Common myeloid progenitor, CD34-positive (primary cell): ENCODE measurements at regions of chr9 and their contacts with region 1.

Region 1: GRCh38 chr9:124929464-124929863 is 11.4 kb downstream of the GOLGA1 start:
- DNase-seq: no peak
- H3K4me3 ChIP-seq: no peak overlapping the region
- H3K27ac ChIP-seq: no peak overlapping the region
- H3K4me1 ChIP-seq: peaks cover 0 to 3% (median 1%) of the 10 kb centered on the region in 4 experiments
- H3K27me3 ChIP-seq: no peaks in the 10 kb centered on the region

Region 2: DNA sequence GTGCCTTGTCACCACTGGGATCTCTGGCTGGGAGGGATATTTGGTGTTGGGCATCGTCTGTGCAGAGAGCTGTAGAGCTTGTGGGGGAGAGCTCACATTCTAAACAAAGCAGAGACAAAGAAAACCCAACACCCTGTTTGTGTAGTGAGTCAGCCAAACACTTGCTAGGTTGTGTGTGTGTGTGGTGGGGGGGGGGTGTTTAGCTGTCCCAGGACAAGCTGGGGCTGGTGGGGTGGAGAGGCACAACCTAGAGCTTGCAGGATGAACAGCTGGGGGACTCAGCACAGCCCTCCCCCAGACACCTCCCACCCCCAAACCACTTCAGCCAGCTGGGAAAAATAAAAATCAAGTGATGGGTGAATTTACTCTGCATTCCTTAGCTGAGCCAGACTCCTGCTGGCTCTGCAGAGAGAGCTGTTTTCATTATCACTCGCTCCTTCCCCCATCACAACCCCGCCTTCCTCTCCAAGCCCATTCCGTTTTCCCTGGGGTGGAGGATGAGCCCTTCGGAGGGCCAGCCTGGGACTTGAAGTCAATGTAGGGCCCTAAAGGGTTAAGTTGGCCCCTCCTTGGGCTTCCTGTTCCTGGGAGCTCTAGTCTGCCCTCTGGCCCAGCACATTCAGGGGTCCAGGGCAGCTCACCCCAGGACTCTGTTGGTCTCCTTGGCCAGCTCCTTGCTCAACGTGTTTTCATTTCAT is 150.0 kb before region 1 on chr9:
- CTCF ChIA-PET with region 1: no interaction called
- POLR2A ChIA-PET with region 1: no interaction called
- DNase-seq: no peak
- H3K4me3 ChIP-seq: no peak overlapping the region
- H3K27ac ChIP-seq: no peak overlapping the region
- H3K4me1 ChIP-seq: peaks cover 0 to 29% (median 15%) of the 10 kb centered on the region in 4 experiments
- H3K27me3 ChIP-seq: peaks cover 0 to 6% (median 3%) of the 10 kb centered on the region in 5 experiments

Region 3: GRCh38 chr9:124852829-124853531 is 76.5 kb before region 1 on chr9 and contains the start of gene WDR38:
- CTCF ChIA-PET with region 1: no interaction called
- POLR2A ChIA-PET with region 1: no interaction called
- DNase-seq: peak; percentile 66 to 86 (median 85)
- H3K4me3 ChIP-seq: peak within 1 kb of the TSS; percentile 16 to 75 (median 51)
- H3K27ac ChIP-seq: no peak within 1 kb of the TSS
- H3K4me1 ChIP-seq: peaks cover 0 to 21% (median 17%) of the 10 kb centered on the region in 4 experiments
- H3K27me3 ChIP-seq: no peaks in the 10 kb centered on the region

Region 4: GRCh38 chr9:124940693-124941453 is 11.4 kb after region 1 on chr9 and contains the start of gene GOLGA1:
- CTCF ChIA-PET with region 1: interaction called, 10 read pairs
- POLR2A ChIA-PET with region 1: no interaction called
- DNase-seq: peak; percentile 92 to 95 (median 94)
- H3K4me3 ChIP-seq: peak within 1 kb of the TSS; percentile 90 to 99 (median 94)
- H3K27ac ChIP-seq: peak within 1 kb of the TSS; percentile 92 to 97
- H3K4me1 ChIP-seq: peaks cover 10 to 18% (median 16%) of the 10 kb centered on the region in 4 experiments
- H3K27me3 ChIP-seq: no peaks in the 10 kb centered on the region

Region 5: DNA sequence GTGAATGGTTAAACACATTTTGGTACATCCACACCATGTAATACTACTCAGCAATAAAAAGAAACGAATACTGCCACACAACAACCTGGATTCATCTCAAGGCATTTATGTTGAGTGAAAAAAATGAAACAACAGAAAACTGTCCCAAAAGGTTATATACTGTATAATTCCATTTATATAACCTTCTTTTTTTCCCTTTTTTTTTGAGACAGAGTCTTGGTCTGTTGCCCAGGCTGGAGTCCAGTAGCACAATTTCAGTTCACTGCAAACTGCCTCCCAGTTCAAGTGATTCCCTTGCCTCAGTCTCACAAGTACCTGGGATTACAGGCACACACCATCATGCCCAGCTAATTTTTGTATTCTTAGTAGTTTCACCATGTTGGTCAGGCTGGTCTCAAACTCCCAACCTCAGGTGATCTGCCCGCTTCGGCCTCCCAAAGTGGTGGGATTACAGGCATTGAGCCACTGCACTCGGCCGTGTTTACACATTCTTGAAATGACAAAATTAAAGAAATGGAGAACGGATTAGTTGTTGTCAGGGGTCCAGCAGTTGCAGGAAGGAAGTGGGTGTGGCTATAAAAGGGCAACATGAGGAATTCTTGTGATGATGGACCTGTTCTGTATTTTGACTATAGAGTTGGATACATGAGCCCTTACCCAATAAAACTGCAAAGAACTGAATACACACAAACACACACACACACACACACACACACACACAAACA is 242.7 kb after region 1 on chr9:
- CTCF ChIA-PET with region 1: no interaction called
- POLR2A ChIA-PET with region 1: no interaction called
- DNase-seq: peak; percentile 27 to 80 (median 68)
- H3K4me3 ChIP-seq: peak overlapping the region in 3 of 7 experiments; percentile 13 to 38 (median 36)
- H3K27ac ChIP-seq: peak overlapping the region in 1 of 2 experiments; percentile 30
- H3K4me1 ChIP-seq: peaks cover 5 to 17% (median 11%) of the 10 kb centered on the region in 4 experiments
- H3K27me3 ChIP-seq: no peaks in the 10 kb centered on the region

Region 6: DNA sequence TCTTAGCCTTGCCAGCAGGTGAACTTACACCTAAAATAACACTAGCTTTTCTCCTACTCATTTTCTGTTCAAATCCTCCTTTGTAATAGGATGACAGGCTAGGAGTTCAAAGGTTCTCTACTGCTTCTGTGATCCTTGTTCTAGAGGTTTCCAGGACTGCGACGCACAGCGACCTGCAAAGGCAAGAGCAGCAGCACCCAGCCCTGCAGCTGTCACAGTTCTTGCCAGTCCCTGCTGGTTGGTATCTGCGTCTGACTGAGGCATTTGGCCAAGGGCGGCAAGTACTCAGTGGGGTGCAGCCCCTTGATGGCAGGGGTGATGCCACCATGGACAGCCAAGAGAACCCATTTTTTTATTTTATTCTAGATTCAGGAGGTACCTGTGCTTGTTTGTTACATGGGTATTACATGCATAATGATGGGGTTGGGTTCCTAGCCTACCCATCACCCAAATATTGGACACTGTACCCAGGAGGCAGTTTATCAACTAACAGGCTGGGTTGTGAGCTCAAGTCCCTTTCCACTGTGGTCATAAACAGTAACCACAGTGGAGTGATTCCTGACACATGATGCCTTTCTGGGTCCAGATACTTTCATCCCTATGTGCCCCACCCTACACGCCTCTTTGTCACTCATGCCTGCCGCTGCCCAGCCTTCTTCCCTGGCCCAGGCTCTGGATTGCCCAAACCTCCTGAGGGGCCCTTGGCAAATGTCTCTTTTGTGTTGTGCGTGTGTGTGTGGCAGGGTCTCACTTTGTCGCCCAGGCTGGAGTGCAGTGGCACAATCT is 443.2 kb after region 1 on chr9:
- CTCF ChIA-PET with region 1: no interaction called
- POLR2A ChIA-PET with region 1: no interaction called
- DNase-seq: no peak
- H3K4me3 ChIP-seq: no peak overlapping the region
- H3K27ac ChIP-seq: no peak overlapping the region
- H3K4me1 ChIP-seq: peaks cover 0 to 8% (median 6%) of the 10 kb centered on the region in 4 experiments
- H3K27me3 ChIP-seq: peaks cover 0 to 5% (median 0%) of the 10 kb centered on the region in 5 experiments